GM10248 (cell line): ENCODE measurements at regions of chr2 and their contacts with region 1.

Region 1: DNA sequence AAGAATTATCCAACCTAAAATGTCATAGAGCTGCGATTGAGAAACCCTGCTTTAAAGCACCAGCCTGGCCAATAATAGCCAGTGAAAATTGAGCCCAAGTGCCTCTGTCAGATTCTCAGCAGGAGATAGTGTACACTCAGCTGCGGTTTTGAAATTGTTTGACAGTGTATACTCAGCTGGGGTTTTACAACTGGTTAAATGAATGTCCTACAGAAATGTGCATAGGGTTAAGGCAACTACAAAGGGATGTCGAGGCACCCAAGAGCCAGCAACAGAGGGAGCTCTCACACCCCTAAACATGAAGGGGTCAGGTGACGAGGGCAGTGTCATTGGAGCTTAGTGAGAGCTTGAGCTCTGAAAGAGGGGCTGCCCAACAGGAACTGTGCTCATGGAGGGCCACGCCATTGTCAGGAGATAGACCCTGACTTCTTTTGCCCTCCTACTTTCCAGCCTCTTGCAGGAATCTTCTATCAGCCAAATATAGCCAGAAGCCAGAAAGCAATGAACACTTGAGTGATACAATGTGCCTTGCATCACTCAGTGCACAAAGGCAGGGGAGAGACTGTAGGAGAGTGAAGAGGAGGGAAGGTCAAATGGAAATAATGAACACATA is 15.1 kb downstream of the ACTG2 start:
- DNase-seq: peak; percentile 76
- CTCF ChIP-seq: peak; percentile 61

Region 2: GRCh38 chr2:73892631-73893329 is 15.2 kb before region 1 on chr2 and contains the start of gene ACTG2:
- CTCF ChIA-PET with region 1: interaction called, 21 read pairs
- POLR2A ChIA-PET with region 1: no interaction called
- DNase-seq: no peak
- CTCF ChIP-seq: no peak

Region 3: DNA sequence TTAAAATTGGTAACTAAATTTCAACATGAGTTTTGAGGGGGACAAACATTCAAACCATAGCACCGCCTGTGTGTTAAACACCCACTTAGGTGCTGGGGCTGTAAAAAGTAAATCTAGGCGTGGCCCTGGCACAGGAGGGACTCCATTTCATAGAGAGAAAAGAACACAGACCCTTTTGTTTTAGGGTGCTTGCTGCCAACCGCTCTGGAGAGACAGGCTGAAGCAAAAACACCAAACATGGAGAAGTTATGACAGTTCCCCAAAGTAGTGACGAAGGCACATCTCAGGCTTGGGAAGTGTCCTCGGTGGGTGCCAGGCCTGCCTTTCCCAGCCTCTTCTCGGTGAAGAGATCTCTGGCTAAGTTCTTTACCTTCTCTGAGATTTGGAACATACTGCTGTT is 10.0 kb before region 1 on chr2:
- CTCF ChIA-PET with region 1: interaction called, 21 read pairs
- POLR2A ChIA-PET with region 1: no interaction called
- DNase-seq: no peak
- CTCF ChIP-seq: no peak

Region 4: DNA sequence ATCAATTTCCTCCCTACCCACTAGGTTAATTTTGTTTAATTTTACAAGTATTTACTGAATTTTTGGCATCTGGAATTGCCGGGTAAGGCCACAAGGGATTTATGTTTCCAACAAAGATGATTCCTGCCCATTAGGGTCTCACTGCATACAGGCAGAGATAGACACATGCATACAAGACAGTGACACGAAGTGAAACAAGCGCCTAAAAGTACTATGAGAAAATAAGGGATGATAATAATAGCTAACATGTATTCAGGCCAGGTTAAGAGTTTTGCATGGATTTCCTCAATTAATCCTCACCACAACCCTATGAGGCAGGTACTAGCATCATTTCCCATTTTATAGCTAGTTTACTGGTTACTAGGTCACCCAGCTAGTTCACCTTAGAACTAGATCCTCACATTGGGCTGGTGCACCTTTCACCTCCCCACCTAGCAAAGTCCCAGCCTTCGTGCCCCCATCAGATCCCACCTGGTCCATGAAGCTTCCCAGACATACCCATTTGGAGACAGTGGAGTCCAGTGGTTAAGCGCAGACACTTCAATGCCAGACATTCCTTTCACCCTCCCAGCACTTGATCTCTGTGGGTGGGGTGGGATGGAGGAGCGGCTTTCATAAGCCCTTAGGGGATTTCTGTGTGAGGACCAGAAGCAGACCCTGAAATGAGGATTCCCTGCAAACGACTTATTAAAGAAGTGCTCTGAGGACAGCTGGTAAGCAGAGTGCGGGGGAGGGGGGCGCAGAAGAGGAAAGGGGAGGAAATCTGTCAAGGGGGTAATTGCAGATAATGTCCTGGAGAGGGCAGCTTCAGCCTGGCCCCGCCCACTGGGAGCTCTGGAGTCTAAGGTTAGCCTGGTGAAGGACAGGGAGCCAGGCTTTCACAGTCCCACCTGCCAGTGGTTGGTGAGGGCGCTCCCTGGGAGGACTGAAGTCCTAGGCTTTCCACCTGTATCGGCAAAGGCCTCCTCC is 12.9 kb after region 1 on chr2:
- CTCF ChIA-PET with region 1: interaction called, 72 read pairs
- POLR2A ChIA-PET with region 1: no interaction called
- DNase-seq: peak; percentile 49
- CTCF ChIP-seq: peak; percentile 20

Region 5: GRCh38 chr2:73987109-73987947 is 79.4 kb after region 1 on chr2:
- CTCF ChIA-PET with region 1: interaction called, 10 read pairs
- POLR2A ChIA-PET with region 1: no interaction called
- DNase-seq: peak; percentile 52
- CTCF ChIP-seq: peak; percentile 32

Region 6: DNA sequence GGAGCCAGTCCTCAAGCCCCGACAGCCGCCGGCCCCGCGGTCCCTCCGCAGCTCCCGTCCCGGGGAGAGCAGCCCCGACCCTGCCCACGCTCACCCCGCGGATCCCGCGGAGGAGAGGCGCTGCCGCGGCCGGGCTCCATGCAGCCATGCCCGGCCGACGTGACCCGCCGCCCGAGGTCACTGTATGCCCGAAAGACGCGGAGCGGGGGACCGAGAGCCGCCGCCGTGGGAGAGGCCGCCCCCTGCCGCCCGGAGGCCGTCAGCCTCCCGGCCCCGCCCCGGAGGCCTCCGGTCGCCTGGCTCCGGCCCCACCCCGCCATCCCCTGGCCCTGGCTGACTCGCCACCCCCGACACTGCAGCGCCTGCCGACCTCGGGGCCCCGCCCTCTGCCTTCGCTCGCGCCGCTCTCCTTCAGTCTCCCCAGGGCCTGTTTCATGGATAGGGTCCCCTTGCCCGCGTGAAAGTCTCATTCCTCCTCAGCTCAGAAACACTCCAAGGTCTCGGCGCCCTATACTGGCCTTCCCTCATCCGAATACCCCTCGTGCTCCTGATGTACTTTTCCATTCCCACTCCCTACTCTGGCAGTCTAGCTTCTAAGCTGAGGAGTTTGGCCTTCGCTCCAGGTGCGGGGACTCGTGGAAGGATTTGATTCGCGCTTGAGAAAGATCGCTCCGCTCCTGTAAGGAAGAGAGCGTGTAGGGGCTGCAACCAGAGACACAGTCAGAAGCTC is 239.9 kb after region 1 on chr2 and contains the start of gene BOLA3:
- CTCF ChIA-PET with region 1: interaction called, 22 read pairs
- POLR2A ChIA-PET with region 1: no interaction called
- DNase-seq: peak; percentile 97
- CTCF ChIP-seq: peak; percentile 81

Region 7: GRCh38 chr2:74152954-74153353 is 245.0 kb after region 1 on chr2:
- CTCF ChIA-PET with region 1: interaction called, 22 read pairs
- POLR2A ChIA-PET with region 1: no interaction called
- DNase-seq: no peak
- CTCF ChIP-seq: no peak